Sigmoid colon (tissue), 7 donors: ENCODE measurements at regions of chr10 and their contacts with region 1.

Region 1: DNA sequence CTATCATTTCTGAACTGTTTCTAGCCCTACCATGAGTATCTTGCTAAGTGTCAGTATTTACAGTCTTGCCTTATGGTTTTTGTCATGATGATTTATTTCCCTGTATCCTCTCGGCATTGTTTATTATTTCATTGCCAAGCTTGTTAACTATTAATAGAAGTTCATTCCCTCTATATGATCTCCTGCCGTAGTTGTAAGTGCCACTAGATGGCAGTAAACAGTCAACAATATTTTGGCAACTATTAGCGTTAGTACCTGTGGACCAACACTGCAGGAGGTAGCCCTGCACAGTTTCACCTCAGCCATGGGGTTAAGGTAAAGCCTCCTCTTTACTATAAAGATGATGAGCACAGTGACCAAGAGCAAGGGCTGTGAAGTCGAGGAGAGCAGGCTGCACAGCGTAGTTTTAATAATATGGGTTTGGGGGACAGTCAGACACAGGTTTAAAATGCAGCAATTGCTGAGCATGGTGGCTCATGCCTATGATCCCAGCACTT is 26.1 kb upstream of the CCNJ start:
- DNase-seq: no peak
- H3K4me3 ChIP-seq: no peak overlapping the region
- H3K27ac ChIP-seq: no peak overlapping the region
- H3K4me1 ChIP-seq: peaks cover 0 to 10% (median 7%) of the 10 kb centered on the region in 4 donors
- H3K27me3 ChIP-seq: no peaks in the 10 kb centered on the region
- CTCF ChIP-seq: peak; percentile 47 to 71 (median 58)
- EP300 ChIP-seq: peak in 2 of 4 donors; percentile 48 to 49
- POLR2A ChIP-seq: no peak

Region 2: GRCh38 chr10:96082153-96082552 is 64.9 kb after region 1 on chr10:
- intact Hi-C with region 1: no loop called
- DNase-seq: no peak
- H3K4me3 ChIP-seq: no peak overlapping the region
- H3K27ac ChIP-seq: no peak overlapping the region
- H3K4me1 ChIP-seq: no peaks in the 10 kb centered on the region
- H3K27me3 ChIP-seq: no peaks in the 10 kb centered on the region
- CTCF ChIP-seq: no peak
- EP300 ChIP-seq: no peak
- POLR2A ChIP-seq: no peak

Region 3: DNA sequence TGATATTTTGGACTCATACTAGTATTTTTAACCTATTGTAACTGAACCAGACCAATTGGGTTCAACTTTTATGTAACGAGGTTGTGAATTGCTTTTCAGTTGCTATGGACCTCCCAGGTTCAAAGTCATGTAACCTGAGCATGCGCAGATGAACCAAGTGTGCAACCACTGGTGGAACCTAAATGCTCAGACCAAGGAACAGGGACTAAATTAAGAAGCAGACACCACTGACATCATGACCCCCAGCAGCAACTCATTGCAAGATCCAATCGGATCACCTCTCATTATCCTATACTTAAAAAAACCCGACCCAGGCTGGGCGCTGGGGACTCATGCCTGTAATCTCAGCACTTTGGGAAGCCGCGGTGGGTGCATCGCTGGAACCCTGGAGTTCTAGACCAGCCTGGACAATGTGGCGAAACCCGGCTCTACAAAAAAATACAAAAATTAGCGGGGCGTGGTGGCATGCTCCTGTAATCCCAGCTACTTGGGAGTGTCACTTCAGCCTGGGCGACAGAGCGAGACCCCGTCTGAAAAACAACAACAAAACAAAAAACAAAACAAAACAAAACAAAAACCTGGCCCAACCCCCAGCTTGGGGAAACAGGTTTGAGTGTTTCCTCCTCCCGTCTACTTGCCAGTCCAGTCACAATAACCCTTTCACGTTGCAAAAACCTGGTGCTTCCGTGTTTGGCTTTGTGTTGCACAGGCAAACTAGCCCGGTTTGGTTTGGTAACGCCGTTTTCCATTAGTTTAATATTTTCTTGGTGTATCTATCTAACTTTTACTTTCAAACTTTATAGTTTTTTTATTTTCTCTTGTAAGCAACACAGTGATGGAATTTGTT is 101.6 kb after region 1 on chr10:
- intact Hi-C with region 1: no loop called
- DNase-seq: no peak
- H3K4me3 ChIP-seq: no peak overlapping the region
- H3K27ac ChIP-seq: no peak overlapping the region
- H3K4me1 ChIP-seq: no peaks in the 10 kb centered on the region
- H3K27me3 ChIP-seq: peaks cover 0 to 76% (median 10%) of the 10 kb centered on the region in 3 donors
- CTCF ChIP-seq: no peak
- EP300 ChIP-seq: no peak
- POLR2A ChIP-seq: no peak

Region 4: GRCh38 chr10:96292971-96293920 is 276.0 kb after region 1 on chr10:
- intact Hi-C with region 1: loop called (anchors 2 kb)
- DNase-seq: no peak
- H3K4me3 ChIP-seq: no peak overlapping the region
- H3K27ac ChIP-seq: no peak overlapping the region
- H3K4me1 ChIP-seq: peaks cover 0 to under 1% (median under 1%) of the 10 kb centered on the region in 4 donors
- H3K27me3 ChIP-seq: no peaks in the 10 kb centered on the region
- CTCF ChIP-seq: peak in 3 of 4 experiments; percentile 28 to 52 (median 44)
- EP300 ChIP-seq: no peak
- POLR2A ChIP-seq: no peak